ENCODE measurements at regions of chr12 and their contacts with region 1.

Region 1: GRCh38 chr12:6267139-6267721 is 43.3 kb upstream of the PLEKHG6 start:
- DNase-seq: no peak
- H3K4me3 Mint-ChIP-seq: no peak overlapping the region
- H3K27ac Mint-ChIP-seq: peak overlapping the region; percentile 57
- H3K4me1 Mint-ChIP-seq: peaks cover 17% of the 10 kb centered on the region
- H3K27me3 Mint-ChIP-seq: peaks cover 4% of the 10 kb centered on the region

Region 2: GRCh38 chr12:6167327-6168259 is 99.6 kb before region 1 on chr12:
- intact Hi-C with region 1: loop called (anchors 1 kb)
- DNase-seq: peak; percentile 24
- H3K4me3 Mint-ChIP-seq: no peak overlapping the region
- H3K27ac Mint-ChIP-seq: peak overlapping the region; percentile 93
- H3K4me1 Mint-ChIP-seq: peaks cover 24% of the 10 kb centered on the region
- H3K27me3 Mint-ChIP-seq: peaks cover 5% of the 10 kb centered on the region

Region 3: GRCh38 chr12:6215932-6216494 is 51.2 kb before region 1 on chr12:
- intact Hi-C with region 1: loop called (anchors 1 kb)
- DNase-seq: no peak
- H3K4me3 Mint-ChIP-seq: no peak overlapping the region
- H3K27ac Mint-ChIP-seq: peak overlapping the region; percentile 61
- H3K4me1 Mint-ChIP-seq: peaks cover 40% of the 10 kb centered on the region
- H3K27me3 Mint-ChIP-seq: peaks cover 7% of the 10 kb centered on the region

Region 4: DNA sequence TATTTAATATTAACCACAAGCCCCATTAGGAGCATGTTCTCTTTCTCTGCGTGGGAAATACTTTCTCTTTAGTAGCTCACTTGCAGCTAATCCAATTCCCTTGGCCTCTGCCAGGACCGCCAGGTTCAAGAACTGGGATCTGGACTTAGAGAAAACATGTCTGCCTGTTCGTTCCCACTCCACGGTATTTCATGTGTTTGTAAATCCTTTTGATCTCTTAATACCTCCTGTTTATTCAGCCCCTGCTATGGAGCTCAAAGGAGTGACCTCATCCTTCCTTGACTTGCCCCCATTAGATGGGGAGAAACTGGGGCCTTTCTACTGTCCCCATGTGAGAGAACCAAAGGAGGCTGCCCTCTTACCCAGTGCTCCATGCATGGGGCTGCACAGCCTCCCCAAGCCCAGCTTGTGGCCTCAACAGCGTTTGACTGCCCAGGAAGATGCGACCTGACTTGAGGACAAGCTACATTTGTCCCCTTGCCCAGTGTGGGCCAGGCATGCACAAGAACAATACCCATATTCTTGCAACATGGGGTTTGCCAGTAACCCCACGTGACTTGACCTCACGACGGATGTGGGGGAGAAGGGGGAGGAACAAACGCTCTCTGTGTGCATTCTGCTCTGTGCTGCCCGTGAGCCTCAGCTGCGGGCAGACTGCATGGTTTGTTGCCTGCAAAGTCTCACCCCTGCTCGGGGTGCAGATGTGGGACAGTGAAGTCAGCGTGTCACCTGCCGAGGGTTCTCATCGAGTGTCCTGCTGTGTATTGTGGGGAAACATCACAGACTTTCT is 36.7 kb before region 1 on chr12:
- intact Hi-C with region 1: loop called (anchors 5 kb)
- DNase-seq: peak; percentile 72
- H3K4me3 Mint-ChIP-seq: peak overlapping the region; percentile 27
- H3K27ac Mint-ChIP-seq: peak overlapping the region; percentile 86
- H3K4me1 Mint-ChIP-seq: peaks cover 22% of the 10 kb centered on the region
- H3K27me3 Mint-ChIP-seq: no peaks in the 10 kb centered on the region

Region 5: DNA sequence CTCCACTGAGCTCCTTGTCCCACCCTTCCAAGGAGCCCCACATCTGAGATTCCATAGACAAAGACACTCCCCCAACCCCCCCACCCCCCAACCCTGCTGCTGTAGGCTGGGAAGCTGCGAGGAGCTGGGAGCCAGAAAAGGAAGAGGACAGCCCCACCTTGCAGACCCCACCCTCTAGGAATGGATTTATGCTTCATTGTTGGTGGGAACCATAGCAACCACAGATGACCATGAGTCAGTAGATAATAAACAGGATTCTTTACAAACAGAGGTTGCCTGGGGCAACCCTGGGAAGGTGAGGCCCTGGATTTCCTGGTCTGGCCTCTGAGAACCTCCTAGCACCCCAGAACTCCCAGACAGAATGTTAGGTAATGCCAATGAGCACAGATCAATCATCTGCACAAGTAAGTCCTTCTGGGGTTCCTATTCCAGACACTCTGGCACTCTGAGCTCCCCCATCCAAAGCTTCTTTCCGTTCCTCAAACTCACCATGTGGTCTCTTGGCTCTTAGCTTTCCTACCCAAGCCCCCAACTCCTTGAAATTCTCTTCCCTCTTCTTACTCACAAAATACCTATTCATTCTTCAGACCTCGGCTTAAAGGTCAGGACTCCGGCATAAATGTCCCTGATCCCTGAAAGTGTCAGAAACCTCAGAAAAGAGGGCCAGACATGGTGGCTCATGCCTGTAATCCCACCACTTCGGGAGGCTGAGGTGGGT is 28.0 kb after region 1 on chr12:
- intact Hi-C with region 1: no loop called
- DNase-seq: no peak
- H3K4me3 Mint-ChIP-seq: no peak overlapping the region
- H3K27ac Mint-ChIP-seq: no peak overlapping the region
- H3K4me1 Mint-ChIP-seq: no peaks in the 10 kb centered on the region
- H3K27me3 Mint-ChIP-seq: peaks cover under 1% of the 10 kb centered on the region